Heart left ventricle (tissue), 16 donors: ENCODE measurements at regions of chr3 and their contacts with region 1.

Region 1: GRCh38 chr3:197906023-197906849 is 43.8 kb upstream of the RPL35A start:
- DNase-seq: peak; percentile 85 to 90 (median 89)
- ATAC-seq: peak; percentile 90 to 98 (median 97)
- H3K4me3 ChIP-seq: peak overlapping the region in 2 of 12 donors; percentile 28 to 29
- H3K27ac ChIP-seq: no peak overlapping the region
- H3K4me1 ChIP-seq: peaks cover 0 to 13% (median 0%) of the 10 kb centered on the region in 12 donors
- H3K27me3 ChIP-seq: no peaks in the 10 kb centered on the region
- CTCF ChIP-seq: peak; percentile 82 to 96 (median 91)
- POLR2A ChIP-seq: no peak

Region 2: GRCh38 chr3:196979545-196979944 is 926.7 kb before region 1 on chr3:
- intact Hi-C with region 1: no loop called
- DNase-seq: peak in 2 of 5 donors; percentile 7 to 12
- ATAC-seq: no peak
- H3K4me3 ChIP-seq: no peak overlapping the region
- H3K27ac ChIP-seq: no peak overlapping the region
- H3K4me1 ChIP-seq: peaks cover 0 to 8% (median 0%) of the 10 kb centered on the region in 12 donors
- H3K27me3 ChIP-seq: peaks cover 0 to 5% (median 0%) of the 10 kb centered on the region in 9 donors
- CTCF ChIP-seq: no peak
- POLR2A ChIP-seq: no peak

Region 3: GRCh38 chr3:197942956-197943556 is 36.8 kb after region 1 on chr3:
- intact Hi-C with region 1: loop called in 7 of 10 experiments (anchors 1 to 5 kb)
- DNase-seq: no peak
- ATAC-seq: peak in 1 of 4 donors; percentile 49
- H3K4me3 ChIP-seq: no peak overlapping the region
- H3K27ac ChIP-seq: no peak overlapping the region
- H3K4me1 ChIP-seq: no peaks in the 10 kb centered on the region
- H3K27me3 ChIP-seq: no peaks in the 10 kb centered on the region
- CTCF ChIP-seq: peak; percentile 59 to 79 (median 70)
- POLR2A ChIP-seq: no peak